Heart right ventricle (tissue), 16 donors: ENCODE measurements at regions of chr18 and their contacts with region 1.

Region 1: GRCh38 chr18:944440-944839 is 39.8 kb downstream of the ADCYAP1 start:
- DNase-seq: no peak
- ATAC-seq: no peak
- H3K4me3 ChIP-seq: no peak overlapping the region
- H3K27ac ChIP-seq: no peak overlapping the region
- H3K4me1 ChIP-seq: no peaks in the 10 kb centered on the region
- H3K27me3 ChIP-seq: peaks cover 0 to 7% (median 0%) of the 10 kb centered on the region in 7 donors
- CTCF ChIP-seq: no peak

Region 2: GRCh38 chr18:877238-877637 is 67.2 kb before region 1 on chr18:
- intact Hi-C with region 1: loop called in 1 of 10 experiments (anchors 10 kb)
- DNase-seq: no peak
- ATAC-seq: no peak
- H3K4me3 ChIP-seq: no peak overlapping the region
- H3K27ac ChIP-seq: no peak overlapping the region
- H3K4me1 ChIP-seq: no peaks in the 10 kb centered on the region
- H3K27me3 ChIP-seq: peaks cover 0 to 13% (median 0%) of the 10 kb centered on the region in 7 donors
- CTCF ChIP-seq: no peak